ENCODE measurements at regions of chr17 and their contacts with region 1.

Region 1: DNA sequence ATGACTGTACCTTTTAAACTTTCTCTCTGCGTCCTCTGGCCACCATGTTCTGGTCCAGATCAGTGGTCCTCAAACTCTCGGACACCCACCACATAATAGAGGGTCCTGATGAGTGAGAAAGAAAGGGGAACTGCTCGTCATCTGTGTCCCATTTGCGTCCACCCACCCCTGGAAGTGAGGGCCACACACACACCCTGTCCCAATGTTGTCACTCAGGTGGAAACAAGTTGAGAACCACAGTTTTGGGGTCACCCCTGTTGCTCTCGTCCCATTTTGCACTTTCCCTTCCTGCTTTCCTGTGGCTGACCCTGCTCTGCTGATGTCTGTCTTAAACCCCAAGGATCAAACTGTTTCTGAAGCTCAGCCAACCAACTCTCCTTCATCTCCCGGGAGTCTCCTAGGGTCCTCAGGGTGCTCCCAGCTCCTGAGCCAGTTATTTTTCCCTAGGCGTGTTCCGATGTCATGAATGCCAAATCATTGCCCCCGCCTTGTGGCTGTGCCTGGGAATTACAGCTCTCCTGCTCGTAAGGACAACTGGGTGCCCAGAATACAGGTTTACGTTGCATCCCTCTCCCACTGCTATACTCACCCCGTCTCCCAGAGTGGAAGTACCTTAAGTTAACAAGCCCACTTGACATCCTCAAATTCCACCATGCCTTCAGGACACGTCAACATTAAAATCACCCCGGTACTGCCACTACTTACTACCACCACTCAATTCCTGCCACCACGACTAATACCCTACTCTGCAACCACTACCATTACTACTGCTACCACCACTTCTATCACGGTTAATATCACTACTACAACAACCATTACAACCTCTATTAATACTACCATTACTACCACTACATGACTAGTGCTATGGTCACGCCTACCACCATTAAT is 26.0 kb upstream of the HNF1B start:
- DNase-seq: peak; percentile 45
- ATAC-seq: peak; percentile 19 to 21

Region 2: DNA sequence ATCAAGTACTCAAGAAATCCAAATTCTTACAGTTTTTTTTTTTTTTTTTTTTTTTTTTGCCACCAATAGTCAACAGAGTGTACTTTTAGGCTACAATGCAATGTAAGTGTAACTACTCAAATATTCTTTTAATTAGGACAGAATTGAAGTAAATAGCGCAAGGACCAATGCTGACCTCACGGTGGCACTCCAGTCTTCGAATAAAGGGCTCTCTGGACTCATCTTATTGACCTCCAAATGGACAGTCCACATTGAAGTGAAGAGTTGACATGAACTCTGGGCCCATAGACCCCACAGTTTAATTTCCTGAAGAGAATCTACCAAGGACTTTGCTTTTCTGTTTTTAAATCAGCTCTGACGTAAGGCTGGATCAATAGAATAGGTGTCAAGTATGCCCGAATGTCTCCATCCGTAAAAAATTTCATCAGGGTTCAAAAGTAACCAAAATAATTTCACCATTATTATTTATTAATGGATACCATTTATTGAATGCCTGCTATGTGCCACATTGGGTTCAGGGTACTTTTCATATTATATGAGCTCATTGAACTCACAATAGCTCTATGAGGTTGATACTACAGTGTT is 120.4 kb before region 1 on chr17:
- intact Hi-C with region 1: loop called (anchors 1 to 10 kb)
- DNase-seq: no peak
- ATAC-seq: peak; percentile 45 to 53

Region 3: DNA sequence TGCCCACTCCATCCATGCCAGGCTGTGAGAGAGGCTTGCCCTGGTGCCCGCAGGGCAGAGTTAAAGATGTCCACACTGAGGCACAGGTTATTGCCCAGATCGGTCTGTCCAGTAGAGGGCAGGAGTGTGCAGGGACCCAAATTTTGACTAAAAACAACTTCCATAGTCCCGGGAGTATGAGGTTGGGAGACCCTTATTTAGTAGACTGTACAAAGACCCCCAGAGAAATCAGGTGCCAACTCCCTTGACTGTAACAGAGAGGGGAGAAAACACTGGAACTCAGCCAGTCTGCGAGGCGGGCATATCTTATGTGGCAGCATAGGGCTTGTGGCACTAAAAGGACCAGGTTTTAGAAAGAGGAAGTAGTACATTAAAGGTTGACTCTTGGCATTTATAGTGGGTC is 69.4 kb before region 1 on chr17:
- intact Hi-C with region 1: loop called in 1 of 2 experiments (anchors 2 kb)
- DNase-seq: peak; percentile 22
- ATAC-seq: peak; percentile 23 to 47

Measured in left cardiac atrium (tissue), 4 donors.